ENCODE measurements at regions of chr1 and their contacts with region 1.

Region 1: DNA sequence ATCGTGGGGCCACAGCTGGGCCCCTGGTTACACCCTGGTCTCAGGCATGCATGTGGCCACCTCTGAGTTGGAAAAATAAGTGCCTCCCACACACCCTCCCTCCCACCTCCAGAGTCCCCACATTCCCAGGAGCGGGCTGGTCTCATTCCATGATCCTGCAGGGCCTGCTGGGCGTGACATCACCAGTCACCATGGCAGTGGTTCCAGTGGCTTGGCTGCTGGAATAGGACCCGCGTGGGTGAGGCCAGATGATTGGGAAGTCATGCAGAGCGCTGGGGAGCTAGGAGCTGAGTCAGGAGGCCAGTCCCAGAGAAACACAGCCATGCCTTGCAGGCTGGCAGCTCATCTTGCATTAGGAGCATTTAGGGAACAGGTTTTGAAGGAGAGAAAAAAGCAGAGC is 125.4 kb upstream of the TMEM51 start:
- DNase-seq: peak in 1 of 2 donors; percentile 29
- H3K4me3 ChIP-seq: no peak overlapping the region
- H3K27ac ChIP-seq: no peak overlapping the region
- H3K4me1 ChIP-seq: no peaks in the 10 kb centered on the region
- H3K27me3 ChIP-seq: no peaks in the 10 kb centered on the region
- CTCF ChIP-seq: no peak
- POLR2A ChIP-seq: no peak

Region 2: DNA sequence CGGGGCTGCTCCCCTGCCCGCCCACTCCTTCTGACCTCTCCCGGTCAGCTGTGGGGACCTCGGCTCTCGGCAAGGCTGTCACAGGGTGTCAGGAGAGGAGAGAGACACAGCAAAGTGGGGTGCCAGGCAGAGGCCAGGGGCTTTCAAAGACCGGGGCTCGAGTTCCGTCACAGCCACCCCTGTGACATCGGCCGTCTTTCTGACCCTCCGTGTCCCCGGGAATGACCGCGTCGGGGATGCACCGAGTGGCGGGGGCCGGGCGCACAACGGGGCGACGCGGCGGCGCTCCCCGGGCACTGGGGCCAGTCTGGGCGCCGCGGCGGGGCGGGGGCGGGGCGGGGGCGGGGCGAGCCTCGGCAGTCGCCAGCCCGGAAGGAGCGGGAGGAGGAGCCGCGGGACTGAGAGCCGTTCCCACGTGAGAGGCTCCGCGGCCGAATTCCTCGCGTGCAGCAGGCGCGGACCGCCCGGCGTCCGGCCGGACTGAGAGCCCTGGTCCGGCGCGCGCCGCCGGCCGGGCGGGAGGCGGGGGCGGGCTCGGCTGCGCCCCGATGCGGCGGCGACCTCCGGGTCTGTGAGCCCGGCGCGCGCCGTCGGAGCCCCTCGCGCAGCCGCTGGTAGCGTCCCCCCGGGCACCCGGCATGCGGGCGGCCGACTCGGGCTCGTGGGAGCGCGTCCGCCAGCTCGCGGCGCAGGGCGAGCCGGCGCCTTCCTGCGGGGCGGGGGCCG is 104.2 kb before region 1 on chr1:
- intact Hi-C with region 1: loop called (anchors 10 kb)
- DNase-seq: peak; percentile 54 to 63
- H3K4me3 ChIP-seq: peak overlapping the region; percentile 16 to 38
- H3K27ac ChIP-seq: peak overlapping the region; percentile 61 to 66
- H3K4me1 ChIP-seq: peaks cover 0 to 8% of the 10 kb centered on the region in 2 donors
- H3K27me3 ChIP-seq: no peaks in the 10 kb centered on the region
- CTCF ChIP-seq: no peak
- POLR2A ChIP-seq: peak; percentile 26 to 30